Heart right ventricle (tissue), 16 donors: ENCODE measurements at regions of chr7 and their contacts with region 1.

Region 1: GRCh38 chr7:35985126-35985754 is 167.8 kb upstream of the EEPD1 start:
- DNase-seq: peak; percentile 79 to 85
- ATAC-seq: peak; percentile 91 to 98 (median 96)
- H3K4me3 ChIP-seq: no peak overlapping the region
- H3K27ac ChIP-seq: no peak overlapping the region
- H3K4me1 ChIP-seq: peaks cover 0 to 8% (median 0%) of the 10 kb centered on the region in 9 donors
- H3K27me3 ChIP-seq: no peaks in the 10 kb centered on the region
- CTCF ChIP-seq: peak; percentile 78 to 95 (median 92)

Region 2: GRCh38 chr7:36084475-36085097 is 99.3 kb after region 1 on chr7:
- intact Hi-C with region 1: loop called in 1 of 10 experiments (anchors 5 kb)
- DNase-seq: peak; percentile 32 to 35
- ATAC-seq: peak in 7 of 8 donors; percentile 42 to 88 (median 67)
- H3K4me3 ChIP-seq: no peak overlapping the region
- H3K27ac ChIP-seq: no peak overlapping the region
- H3K4me1 ChIP-seq: peaks cover 0 to 23% (median 10%) of the 10 kb centered on the region in 9 donors
- H3K27me3 ChIP-seq: no peaks in the 10 kb centered on the region
- CTCF ChIP-seq: peak in 8 of 9 donors; percentile 17 to 47 (median 30)

Region 3: GRCh38 chr7:36096460-36097095 is 111.3 kb after region 1 on chr7:
- intact Hi-C with region 1: loop called in 5 of 10 experiments (anchors 5 to 10 kb)
- DNase-seq: no peak
- ATAC-seq: peak in 7 of 8 donors; percentile 41 to 76 (median 67)
- H3K4me3 ChIP-seq: no peak overlapping the region
- H3K27ac ChIP-seq: no peak overlapping the region
- H3K4me1 ChIP-seq: peaks cover 0 to 19% (median 8%) of the 10 kb centered on the region in 9 donors
- H3K27me3 ChIP-seq: no peaks in the 10 kb centered on the region
- CTCF ChIP-seq: peak in 4 of 9 donors; percentile 17 to 48 (median 34)

Region 4: GRCh38 chr7:36115448-36116321 is 130.4 kb after region 1 on chr7:
- intact Hi-C with region 1: loop called in 1 of 10 experiments (anchors 10 kb)
- DNase-seq: peak; percentile 36 to 68
- ATAC-seq: peak; percentile 27 to 85 (median 62)
- H3K4me3 ChIP-seq: no peak overlapping the region
- H3K27ac ChIP-seq: peak overlapping the region in 6 of 10 donors; percentile 3 to 61 (median 44)
- H3K4me1 ChIP-seq: peaks cover 6 to 57% (median 34%) of the 10 kb centered on the region in 9 donors
- H3K27me3 ChIP-seq: no peaks in the 10 kb centered on the region
- CTCF ChIP-seq: no peak

Region 5: GRCh38 chr7:36312344-36313334 is 327.4 kb after region 1 on chr7:
- intact Hi-C with region 1: loop called in 4 of 10 experiments (anchors 2 to 5 kb)
- DNase-seq: no peak
- ATAC-seq: no peak
- H3K4me3 ChIP-seq: no peak overlapping the region
- H3K27ac ChIP-seq: no peak overlapping the region
- H3K4me1 ChIP-seq: peaks cover 0 to 20% (median 6%) of the 10 kb centered on the region in 9 donors
- H3K27me3 ChIP-seq: no peaks in the 10 kb centered on the region
- CTCF ChIP-seq: no peak

Region 6: DNA sequence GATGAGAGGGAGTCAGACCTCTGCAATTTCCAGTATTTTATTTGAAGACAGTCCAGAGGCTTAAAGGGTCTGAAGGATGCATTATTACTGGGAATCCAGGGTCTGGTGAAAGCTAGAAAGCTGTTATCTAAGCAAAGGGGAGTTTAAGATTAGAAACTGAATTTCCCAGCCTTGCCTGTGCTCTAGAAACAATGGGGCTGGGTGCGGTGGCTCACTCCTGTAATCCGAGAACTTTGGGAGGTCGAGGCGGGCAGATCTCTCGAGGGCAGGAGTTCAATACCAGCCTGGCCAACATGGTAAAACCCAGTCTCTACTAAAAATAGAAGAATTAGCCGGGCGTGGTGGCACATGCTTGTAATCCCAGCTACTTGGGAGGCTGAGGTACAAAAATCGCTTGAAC is 332.9 kb after region 1 on chr7:
- intact Hi-C with region 1: loop called in 9 of 10 experiments (anchors 1 to 5 kb)
- DNase-seq: no peak
- ATAC-seq: no peak
- H3K4me3 ChIP-seq: no peak overlapping the region
- H3K27ac ChIP-seq: no peak overlapping the region
- H3K4me1 ChIP-seq: peaks cover 0 to 9% (median 0%) of the 10 kb centered on the region in 9 donors
- H3K27me3 ChIP-seq: no peaks in the 10 kb centered on the region
- CTCF ChIP-seq: no peak